Mammary epithelial cell (primary cell): ENCODE measurements at regions of chr7 and their contacts with region 1.

Region 1: GRCh38 chr7:73358590-73359275 is 30.8 kb downstream of the FKBP6 start:
- DNase-seq: no peak
- H3K4me3 ChIP-seq: no peak overlapping the region
- H3K27ac ChIP-seq: no peak overlapping the region
- H3K4me1 ChIP-seq: no peaks in the 10 kb centered on the region
- H3K27me3 ChIP-seq: peaks cover 4% of the 10 kb centered on the region
- CTCF ChIP-seq: no peak

Region 2: GRCh38 chr7:73316521-73316920 is 42.2 kb before region 1 on chr7:
- CTCF ChIA-PET with region 1: no interaction called
- dilution Hi-C with region 1: no loop called
- in situ Hi-C with region 1: no loop called
- intact Hi-C with region 1: loop called (anchors 5 kb)
- DNase-seq: no peak
- H3K4me3 ChIP-seq: no peak overlapping the region
- H3K27ac ChIP-seq: no peak overlapping the region
- H3K4me1 ChIP-seq: no peaks in the 10 kb centered on the region
- H3K27me3 ChIP-seq: no peaks in the 10 kb centered on the region
- CTCF ChIP-seq: no peak

Region 3: DNA sequence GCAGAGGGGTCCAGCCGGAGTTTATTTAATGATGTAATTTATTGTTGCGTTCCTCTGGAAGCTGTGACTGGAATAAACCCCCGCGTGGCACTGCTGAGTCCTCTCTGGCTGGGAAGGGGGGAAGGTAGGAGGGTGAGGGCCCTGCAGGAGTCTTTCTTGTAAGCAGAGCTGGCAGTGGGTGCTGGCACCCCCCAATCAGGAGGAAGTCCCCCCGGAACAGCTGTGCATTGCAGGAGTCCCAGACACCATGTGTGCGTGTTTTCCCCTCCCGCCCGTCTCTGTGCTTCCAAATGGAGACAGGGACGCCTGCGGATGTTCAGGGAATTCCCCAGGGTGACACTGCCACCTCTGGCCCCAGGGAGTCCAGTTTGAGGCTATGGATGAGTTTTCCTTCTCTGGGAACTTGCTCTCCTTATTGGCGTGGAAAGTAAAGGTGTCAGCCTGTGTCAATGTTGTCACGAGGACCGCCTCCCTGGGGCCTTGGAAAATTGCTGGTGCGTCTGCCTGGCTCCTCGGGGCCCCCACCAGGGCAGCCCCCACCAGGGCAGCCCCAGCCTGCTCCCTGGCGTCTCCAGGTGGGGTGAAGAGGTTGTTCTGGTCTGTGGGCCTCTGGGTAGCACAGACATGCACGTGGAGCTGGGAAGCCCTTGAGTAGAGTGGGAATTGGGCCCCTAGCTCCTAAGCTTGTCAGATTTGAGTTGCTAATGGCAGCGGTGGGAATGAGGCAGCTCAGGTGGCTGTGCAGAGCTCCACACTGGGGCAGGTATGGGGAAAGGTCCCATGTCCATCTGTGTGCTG is 77.5 kb after region 1 on chr7:
- CTCF ChIA-PET with region 1: no interaction called
- dilution Hi-C with region 1: loop called (anchors 5 kb)
- in situ Hi-C with region 1: no loop called
- intact Hi-C with region 1: no loop called
- DNase-seq: no peak
- H3K4me3 ChIP-seq: no peak overlapping the region
- H3K27ac ChIP-seq: no peak overlapping the region
- H3K4me1 ChIP-seq: no peaks in the 10 kb centered on the region
- H3K27me3 ChIP-seq: no peaks in the 10 kb centered on the region
- CTCF ChIP-seq: no peak